Common myeloid progenitor, CD34-positive (primary cell): ENCODE measurements at regions of chr1 and their contacts with region 1.

Region 1: GRCh38 chr1:201999625-202000238 is 10.7 kb upstream of the ELF3 start:
- DNase-seq: peak; percentile 47 to 66 (median 64)
- H3K4me3 ChIP-seq: no peak overlapping the region
- H3K27ac ChIP-seq: no peak overlapping the region
- H3K4me1 ChIP-seq: no peaks in the 10 kb centered on the region
- H3K27me3 ChIP-seq: no peaks in the 10 kb centered on the region

Region 2: GRCh38 chr1:201904579-201904978 is 95.2 kb before region 1 on chr1:
- CTCF ChIA-PET with region 1: no interaction called
- POLR2A ChIA-PET with region 1: no interaction called
- DNase-seq: no peak
- H3K4me3 ChIP-seq: no peak overlapping the region
- H3K27ac ChIP-seq: no peak overlapping the region
- H3K4me1 ChIP-seq: no peaks in the 10 kb centered on the region
- H3K27me3 ChIP-seq: no peaks in the 10 kb centered on the region

Region 3: GRCh38 chr1:201982623-201983379 is 16.9 kb before region 1 on chr1 and contains the start of gene RNPEP:
- CTCF ChIA-PET with region 1: interaction called, 16 read pairs
- POLR2A ChIA-PET with region 1: no interaction called
- DNase-seq: peak; percentile 42 to 77 (median 59)
- H3K4me3 ChIP-seq: peak within 1 kb of the TSS; percentile 66 to 90 (median 75)
- H3K27ac ChIP-seq: peak within 1 kb of the TSS; percentile 7 to 75
- H3K4me1 ChIP-seq: peaks cover 2 to 15% (median 15%) of the 10 kb centered on the region in 4 experiments
- H3K27me3 ChIP-seq: no peaks in the 10 kb centered on the region

Region 4: GRCh38 chr1:202034683-202035462 is 35.1 kb after region 1 on chr1:
- CTCF ChIA-PET with region 1: no interaction called
- POLR2A ChIA-PET with region 1: no interaction called
- DNase-seq: no peak
- H3K4me3 ChIP-seq: no peak overlapping the region
- H3K27ac ChIP-seq: no peak overlapping the region
- H3K4me1 ChIP-seq: no peaks in the 10 kb centered on the region
- H3K27me3 ChIP-seq: peaks cover 0 to 6% (median 0%) of the 10 kb centered on the region in 5 experiments

Region 5: DNA sequence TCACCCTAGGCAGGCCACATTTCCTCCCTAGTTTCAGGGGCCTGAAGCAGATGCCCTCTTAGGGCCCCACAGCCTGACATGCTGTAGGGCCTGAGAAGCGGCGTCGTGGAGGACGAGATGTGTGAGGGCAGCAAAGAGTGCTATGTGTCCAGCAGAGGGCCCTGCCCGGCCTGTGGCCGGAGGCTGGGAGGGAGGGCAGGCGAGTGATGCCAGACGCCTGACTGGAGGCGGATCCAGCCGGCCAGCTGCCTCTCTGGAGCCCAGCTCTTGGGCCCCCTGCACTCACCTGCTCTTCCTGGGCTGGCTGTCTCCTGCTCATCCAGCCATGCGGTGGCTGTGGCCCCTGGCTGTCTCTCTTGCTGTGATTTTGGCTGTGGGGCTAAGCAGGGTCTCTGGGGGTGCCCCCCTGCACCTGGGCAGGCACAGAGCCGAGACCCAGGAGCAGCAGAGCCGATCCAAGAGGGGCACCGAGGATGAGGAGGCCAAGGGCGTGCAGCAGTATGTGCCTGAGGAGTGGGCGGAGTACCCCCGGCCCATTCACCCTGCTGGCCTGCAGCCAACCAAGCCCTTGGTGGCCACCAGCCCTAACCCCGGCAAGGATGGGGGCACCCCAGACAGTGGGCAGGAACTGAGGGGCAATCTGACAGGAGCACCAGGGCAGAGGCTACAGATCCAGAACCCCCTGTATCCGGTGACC is 123.1 kb after region 1 on chr1 and contains the start of gene GPR37L1:
- CTCF ChIA-PET with region 1: interaction called, 43 read pairs
- POLR2A ChIA-PET with region 1: no interaction called
- DNase-seq: no peak
- H3K4me3 ChIP-seq: no peak within 1 kb of the TSS
- H3K27ac ChIP-seq: no peak within 1 kb of the TSS
- H3K4me1 ChIP-seq: peaks cover 0 to 8% (median 6%) of the 10 kb centered on the region in 4 experiments
- H3K27me3 ChIP-seq: peaks cover 0 to 2% (median 0%) of the 10 kb centered on the region in 5 experiments

Region 6: DNA sequence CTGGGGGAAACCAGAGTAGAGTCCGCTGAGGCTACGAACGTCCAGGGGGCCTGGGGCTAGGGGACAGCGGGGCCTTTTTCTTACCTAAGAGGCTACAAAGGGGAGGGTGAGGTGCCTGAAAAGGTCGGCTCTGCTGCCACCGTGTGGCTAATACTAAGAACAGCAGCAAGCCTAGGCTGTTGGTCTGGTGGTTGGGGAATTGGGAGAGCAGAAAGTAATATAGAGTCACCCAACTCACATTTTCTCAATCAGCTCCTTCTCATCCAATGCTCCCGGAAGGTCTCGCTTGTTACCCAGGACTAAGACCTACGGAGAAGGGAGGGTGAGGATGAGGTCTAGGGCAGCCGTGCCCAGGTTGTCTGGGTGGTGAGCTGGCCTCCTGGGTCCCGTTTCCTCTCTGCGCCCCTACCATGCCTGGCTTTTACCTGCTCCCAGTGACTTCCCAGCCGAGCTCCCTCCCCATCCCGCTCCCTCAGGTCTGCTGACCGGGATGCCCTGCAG is 135.5 kb after region 1 on chr1:
- CTCF ChIA-PET with region 1: interaction called, 31 read pairs
- POLR2A ChIA-PET with region 1: no interaction called
- DNase-seq: peak; percentile 51 to 76 (median 67)
- H3K4me3 ChIP-seq: no peak overlapping the region
- H3K27ac ChIP-seq: no peak overlapping the region
- H3K4me1 ChIP-seq: peaks cover 0 to 3% (median under 1%) of the 10 kb centered on the region in 4 experiments
- H3K27me3 ChIP-seq: no peaks in the 10 kb centered on the region